Panc1 (cell line): ENCODE measurements at regions of chr19 and their contacts with region 1.

Region 1: GRCh38 chr19:4589579-4590410 is 30.3 kb upstream of the SEMA6B start:
- DNase-seq: no peak
- ATAC-seq: peak; percentile 67
- H3K4me3 ChIP-seq: no peak overlapping the region
- H3K27ac ChIP-seq: no peak overlapping the region
- H3K4me1 ChIP-seq: no peaks in the 10 kb centered on the region
- H3K27me3 ChIP-seq: no peaks in the 10 kb centered on the region
- CTCF ChIP-seq: peak; percentile 68; the same call in 1 of the 2 replicates

Region 2: GRCh38 chr19:4624733-4625362 is 35.1 kb after region 1 on chr19:
- CTCF ChIA-PET with region 1: interaction called, 11 read pairs
- POLR2A ChIA-PET with region 1: no interaction called
- in situ Hi-C with region 1: no loop called
- intact Hi-C with region 1: no loop called
- DNase-seq: no peak
- ATAC-seq: peak; percentile 79
- H3K4me3 ChIP-seq: no peak overlapping the region
- H3K27ac ChIP-seq: no peak overlapping the region
- H3K4me1 ChIP-seq: peaks cover 9% of the 10 kb centered on the region; the same call in 1 of the 2 replicates
- H3K27me3 ChIP-seq: no peaks in the 10 kb centered on the region
- CTCF ChIP-seq: peak; percentile 76